Endothelial cell of umbilical vein (primary cell): ENCODE measurements at regions of chr14 and their contacts with region 1.

Region 1: GRCh38 chr14:103520657-103521437 is 1.8 kb downstream of the CKB start:
- DNase-seq: peak; percentile 49
- H3K4me3 ChIP-seq: peak overlapping the region in 1 of 3 experiments; percentile 35
- H3K27ac ChIP-seq: no peak overlapping the region
- H3K4me1 ChIP-seq: peaks cover 14% of the 10 kb centered on the region
- H3K27me3 ChIP-seq: peaks cover 19 to 34% of the 10 kb centered on the region in 2 experiments
- CTCF ChIP-seq: peak; percentile 36 to 70
- POLR2A ChIP-seq: no peak

Region 2: GRCh38 chr14:103500148-103500990 is 20.5 kb before region 1 on chr14:
- CTCF ChIA-PET with region 1: interaction called, 17 read pairs
- POLR2A ChIA-PET with region 1: no interaction called
- dilution Hi-C with region 1: no loop called
- intact Hi-C with region 1: no loop called
- DNase-seq: peak; percentile 83
- H3K4me3 ChIP-seq: no peak overlapping the region
- H3K27ac ChIP-seq: no peak overlapping the region
- H3K4me1 ChIP-seq: no peaks in the 10 kb centered on the region
- H3K27me3 ChIP-seq: no peaks in the 10 kb centered on the region
- CTCF ChIP-seq: peak; percentile 93 to 98
- POLR2A ChIP-seq: no peak

Region 3: GRCh38 chr14:103539056-103539825 is 18.4 kb after region 1 on chr14:
- CTCF ChIA-PET with region 1: interaction called, 209 read pairs
- POLR2A ChIA-PET with region 1: no interaction called
- dilution Hi-C with region 1: no loop called
- intact Hi-C with region 1: no loop called
- DNase-seq: no peak
- H3K4me3 ChIP-seq: no peak overlapping the region
- H3K27ac ChIP-seq: no peak overlapping the region
- H3K4me1 ChIP-seq: no peaks in the 10 kb centered on the region
- H3K27me3 ChIP-seq: no peaks in the 10 kb centered on the region
- CTCF ChIP-seq: no peak
- POLR2A ChIP-seq: no peak

Region 4: DNA sequence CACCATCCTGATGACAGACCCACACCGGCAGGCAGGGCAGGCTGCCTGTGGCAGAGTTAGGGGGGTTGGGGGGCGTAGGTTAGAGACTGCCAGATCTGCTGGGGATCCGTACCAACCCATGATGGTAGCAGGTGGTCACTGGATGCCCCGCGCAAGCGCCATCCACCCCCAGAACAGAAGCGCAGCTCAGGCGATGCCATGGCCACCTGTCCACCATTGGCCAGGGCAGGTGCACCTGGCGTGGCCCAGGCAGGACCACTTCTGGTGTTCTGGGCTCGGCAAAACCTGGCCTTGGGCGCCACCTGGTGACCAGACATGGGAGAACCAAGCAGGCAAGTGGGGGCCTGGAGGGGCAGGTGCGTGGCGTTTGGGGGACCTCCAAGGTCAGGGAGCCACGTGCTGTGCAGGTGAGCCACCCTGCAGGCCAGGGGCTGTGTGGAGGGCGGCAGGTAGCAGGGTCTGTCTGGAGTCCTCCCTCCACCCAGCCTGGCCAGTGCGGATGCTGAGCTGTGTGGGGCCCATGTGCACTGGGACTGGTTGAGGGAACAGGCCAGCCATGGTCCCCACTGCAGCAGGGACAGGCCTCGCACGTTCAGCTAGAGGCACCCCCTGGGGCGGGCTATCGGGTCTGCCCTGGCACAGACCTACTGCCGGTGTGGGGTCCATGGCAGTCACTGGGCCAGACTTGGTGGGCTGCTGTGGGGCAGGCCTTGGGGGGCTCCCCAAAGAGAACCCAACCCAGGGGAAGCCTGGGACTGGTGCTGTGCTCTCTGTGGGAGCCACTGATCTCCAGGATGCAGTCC is 26.0 kb after region 1 on chr14:
- CTCF ChIA-PET with region 1: interaction called, 209 read pairs
- POLR2A ChIA-PET with region 1: interaction called, 3 read pairs
- dilution Hi-C with region 1: no loop called
- intact Hi-C with region 1: loop called (anchors 1 kb)
- DNase-seq: peak; percentile 40
- H3K4me3 ChIP-seq: no peak overlapping the region
- H3K27ac ChIP-seq: no peak overlapping the region
- H3K4me1 ChIP-seq: no peaks in the 10 kb centered on the region
- H3K27me3 ChIP-seq: no peaks in the 10 kb centered on the region
- CTCF ChIP-seq: peak; percentile 82 to 88
- POLR2A ChIP-seq: no peak

Region 5: GRCh38 chr14:103562429-103563225 is 41.8 kb after region 1 on chr14 and contains the starts of genes BAG5 and COA8:
- CTCF ChIA-PET with region 1: interaction called, 19 read pairs
- POLR2A ChIA-PET with region 1: no interaction called
- dilution Hi-C with region 1: no loop called
- intact Hi-C with region 1: loop called (anchors 5 kb)
- DNase-seq: peak; percentile 86
- H3K4me3 ChIP-seq: peak within 1 kb of the TSS; percentile 61 to 97 (median 95)
- H3K27ac ChIP-seq: peak within 1 kb of the TSS; percentile 94
- H3K4me1 ChIP-seq: peaks cover 23% of the 10 kb centered on the region
- H3K27me3 ChIP-seq: no peaks in the 10 kb centered on the region
- CTCF ChIP-seq: no peak
- POLR2A ChIP-seq: peak; percentile 36
- total RNA-seq, gene BAG5: 28.4 and 32.5 TPM in 2 replicates
- total RNA-seq, gene COA8: 46.4 and 52.6 TPM in 2 replicates